Left colon (tissue), 2 donors: ENCODE measurements at regions of chr18 and their contacts with region 1.

Region 1: GRCh38 chr18:42298759-42299675 is 344.0 kb downstream of the PIK3C3 start:
- DNase-seq: peak; percentile 33 to 67
- ATAC-seq: peak; percentile 76

Region 2: DNA sequence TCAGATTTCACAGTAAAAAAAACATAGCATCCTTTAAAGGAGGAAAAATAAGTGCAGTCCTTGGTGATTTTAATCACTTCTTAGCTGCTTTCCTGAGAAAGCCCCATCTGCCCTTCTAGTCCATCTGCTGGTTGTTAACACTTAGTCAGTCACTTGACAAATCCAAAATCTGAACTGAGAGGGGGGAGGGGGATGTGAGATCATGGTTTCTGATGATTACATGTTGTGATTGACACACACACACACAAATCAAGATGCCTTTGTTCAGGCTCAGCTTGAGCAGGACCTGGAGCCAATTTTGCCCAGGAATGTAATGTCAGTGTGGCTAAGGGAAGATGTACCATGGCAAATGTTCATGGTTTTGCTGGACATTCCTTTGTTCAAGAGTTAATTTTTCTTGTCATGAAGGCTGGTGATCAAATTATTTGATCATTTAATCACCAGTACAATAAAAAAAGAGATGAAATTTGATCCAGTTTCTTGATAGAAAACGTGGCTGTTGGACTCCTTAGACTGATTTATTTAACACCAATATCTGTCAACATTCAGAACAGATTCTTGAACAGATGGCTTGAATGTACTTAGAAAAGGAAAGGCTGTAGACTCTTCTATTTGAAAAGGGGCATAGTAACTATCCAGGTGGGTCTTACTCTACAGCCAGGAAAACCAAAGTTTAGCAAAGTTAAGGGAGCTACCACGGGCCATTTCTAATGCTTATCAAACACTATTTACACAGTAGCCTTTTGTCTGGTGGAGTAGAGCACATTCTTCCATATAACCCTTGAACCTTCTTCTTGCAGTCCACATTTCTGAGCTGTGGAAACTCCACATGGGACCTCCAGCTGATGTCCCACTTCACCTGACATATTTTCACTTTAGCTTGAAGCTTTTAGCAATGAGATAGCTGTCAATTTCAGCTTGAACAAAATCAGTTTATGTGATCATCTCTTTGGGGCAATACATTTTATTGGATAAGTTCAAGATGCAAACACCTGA is 64.7 kb after region 1 on chr18:
- intact Hi-C with region 1: no loop called
- DNase-seq: no peak
- ATAC-seq: no peak

Region 3: DNA sequence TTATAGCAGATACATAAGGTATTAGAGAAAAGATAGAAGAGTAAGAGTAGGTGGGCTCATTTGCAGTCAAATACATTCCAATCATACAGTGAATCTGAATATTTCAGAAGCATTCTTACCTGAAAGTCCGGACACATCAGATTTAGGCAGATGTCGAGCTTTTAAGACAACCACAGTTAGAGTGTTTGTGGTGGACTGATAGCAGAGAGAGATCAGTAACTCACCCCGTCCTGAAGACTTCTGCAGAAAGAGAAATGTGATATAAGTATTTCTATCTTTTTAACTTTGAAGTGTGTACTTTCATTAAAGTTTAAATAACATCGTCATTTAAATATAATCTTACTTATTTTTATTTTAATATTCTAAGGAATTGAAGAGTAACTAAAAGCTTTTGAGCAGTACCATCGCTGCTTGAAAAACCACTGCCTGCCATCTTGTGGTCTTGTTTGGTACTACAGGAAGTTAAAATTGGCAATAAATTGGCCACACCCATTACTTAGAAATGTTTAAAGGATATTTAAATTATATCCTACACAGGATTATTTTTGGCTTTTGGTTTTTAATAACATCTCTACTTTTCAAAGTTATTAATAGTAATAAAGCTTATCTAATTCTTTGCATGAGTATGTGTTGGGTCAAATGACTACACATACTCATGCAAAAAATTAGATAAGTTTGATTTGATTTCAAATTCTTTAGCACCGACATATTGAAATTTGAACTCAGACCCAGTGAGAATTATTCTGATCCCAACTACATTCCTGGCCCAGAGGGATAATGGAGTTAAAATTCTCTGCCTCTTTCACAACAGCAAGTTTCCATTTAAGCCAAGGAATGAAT is 972.8 kb after region 1 on chr18:
- intact Hi-C with region 1: loop called in 1 of 2 experiments (anchors 10 kb)
- DNase-seq: no peak
- ATAC-seq: no peak